Panc1 (cell line): ENCODE measurements at regions of chr1 and their contacts with region 1.

Region 1: DNA sequence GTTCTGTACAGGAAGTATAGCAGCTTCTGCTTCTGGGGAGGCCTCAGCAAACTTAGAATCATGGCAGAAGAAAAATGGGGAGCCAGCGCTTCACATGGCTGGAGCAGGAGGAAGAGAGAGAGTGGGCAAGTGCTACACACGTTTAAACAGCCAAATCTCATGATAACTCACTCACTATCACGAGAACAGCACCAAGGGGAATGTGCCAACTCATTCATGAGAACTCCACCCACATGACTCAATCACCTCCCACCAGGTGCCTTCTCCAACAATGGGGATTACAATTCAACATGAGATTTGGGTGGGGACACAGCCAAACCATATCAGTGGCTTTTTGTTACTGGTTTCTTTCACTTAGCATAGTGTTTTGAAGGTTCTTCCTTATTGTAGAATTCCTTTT is 138.6 kb downstream of the SYT14 start:
- DNase-seq: no peak
- ATAC-seq: no peak
- H3K4me3 ChIP-seq: no peak overlapping the region
- H3K27ac ChIP-seq: no peak overlapping the region
- H3K4me1 ChIP-seq: no peaks in the 10 kb centered on the region
- H3K27me3 ChIP-seq: no peaks in the 10 kb centered on the region
- CTCF ChIP-seq: no peak

Region 2: GRCh38 chr1:210099921-210100320 is 23.3 kb after region 1 on chr1:
- CTCF ChIA-PET with region 1: no interaction called
- POLR2A ChIA-PET with region 1: no interaction called
- in situ Hi-C with region 1: no loop called
- intact Hi-C with region 1: loop called (anchors 1 kb)
- DNase-seq: no peak
- ATAC-seq: no peak
- H3K4me3 ChIP-seq: no peak overlapping the region
- H3K27ac ChIP-seq: no peak overlapping the region
- H3K4me1 ChIP-seq: no peaks in the 10 kb centered on the region
- H3K27me3 ChIP-seq: no peaks in the 10 kb centered on the region; the same call in 1 of the 2 replicates
- CTCF ChIP-seq: no peak